H1 (cell line): ENCODE measurements at regions of chr2 and their contacts with region 1.

Region 1: DNA sequence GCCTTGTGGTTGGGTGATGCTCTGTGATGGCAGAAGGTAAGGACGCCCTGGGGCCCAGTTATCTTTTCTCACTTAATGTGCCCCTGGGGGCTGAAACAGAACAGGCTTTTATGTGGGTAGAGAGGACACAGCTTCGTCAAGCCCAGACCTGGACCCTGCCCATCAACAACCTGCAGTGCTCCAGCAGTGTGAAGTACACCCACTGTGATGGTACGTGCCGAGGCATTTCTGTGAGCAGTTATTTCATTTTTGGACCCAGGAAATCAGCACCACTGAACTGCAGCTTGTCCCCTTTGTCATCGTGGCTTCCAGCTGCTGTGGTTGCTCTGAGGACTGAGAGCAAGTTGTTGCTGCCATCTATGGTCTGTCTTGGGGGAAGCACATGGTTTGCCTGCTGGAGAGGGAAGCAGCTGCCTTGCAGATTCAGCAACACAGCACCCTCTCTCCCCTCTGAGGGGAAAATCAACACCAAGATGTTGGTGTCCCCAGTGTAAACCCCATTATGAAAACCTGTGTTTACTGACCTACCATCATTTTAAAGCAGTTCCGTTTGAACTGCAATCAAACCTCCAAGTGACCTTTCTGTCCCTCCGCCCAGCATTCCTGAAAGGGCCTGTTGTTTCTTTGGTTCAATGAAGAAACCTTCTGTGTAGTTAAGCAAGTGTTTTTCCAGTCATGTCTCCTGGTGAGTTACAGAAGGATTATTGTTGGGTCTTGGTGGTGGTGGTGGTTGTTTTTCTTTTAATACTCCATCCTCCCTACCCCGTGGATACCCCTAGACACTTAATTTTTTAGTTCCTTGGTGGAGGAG is 158.2 kb downstream of the MGAT5 start:
- DNase-seq: peak; percentile 39 to 60
- H3K4me3 ChIP-seq: no peak overlapping the region
- H3K27ac ChIP-seq: no peak overlapping the region
- H3K4me1 ChIP-seq: peaks cover 0 to 5% (median 0%) of the 10 kb centered on the region in 4 experiments; a peak in 1 of 7 replicates
- H3K27me3 ChIP-seq: no peaks in the 10 kb centered on the region
- CTCF ChIP-seq: peak; percentile 71 to 92 (median 73)
- EP300 ChIP-seq: no peak
- POLR2A ChIP-seq: no peak
- RAD21 ChIP-seq: peak; percentile 89 to 91

Region 2: DNA sequence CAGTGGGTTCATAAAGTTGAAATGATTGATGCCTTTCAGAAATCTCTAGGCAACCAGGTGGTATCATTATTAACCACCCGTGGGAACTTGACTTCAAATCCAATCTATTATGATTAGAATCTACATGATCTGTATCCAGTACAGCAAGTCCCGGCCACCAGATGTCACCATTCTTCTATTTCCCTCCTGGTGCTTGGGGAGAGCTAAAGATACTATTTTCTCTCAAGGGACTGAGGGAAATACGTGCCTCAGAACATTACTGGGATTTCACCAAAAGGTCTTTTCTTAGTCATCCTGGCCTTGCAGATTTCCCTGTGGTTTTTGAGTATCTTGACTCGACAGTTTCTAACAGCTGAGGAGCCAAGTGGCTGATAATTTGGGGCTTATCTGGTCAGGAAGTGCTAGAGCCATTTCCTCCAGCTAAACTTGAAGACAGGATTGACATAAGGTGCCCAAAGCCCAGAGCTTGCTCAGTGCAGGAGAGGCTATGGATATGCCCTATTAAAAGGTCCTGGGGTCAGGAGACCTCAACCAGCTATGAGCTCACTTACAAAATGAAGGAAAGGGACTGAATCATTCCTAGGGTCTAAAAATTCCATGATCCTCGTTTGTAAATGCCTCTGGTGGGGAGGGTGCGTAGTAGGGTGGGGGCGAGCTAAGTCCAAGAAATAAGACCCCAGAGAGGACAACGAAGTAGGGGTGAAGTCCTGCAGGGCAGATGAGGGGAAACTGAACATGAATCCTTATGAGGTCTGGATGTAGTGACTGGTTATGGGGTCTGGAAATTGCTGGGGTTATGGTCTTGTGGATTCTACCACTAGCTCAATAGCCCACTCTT is 293.5 kb before region 1 on chr2:
- CTCF ChIA-PET with region 1: interaction called, 50 read pairs
- POLR2A ChIA-PET with region 1: no interaction called
- DNase-seq: peak in 1 of 2 experiments; percentile 64
- H3K4me3 ChIP-seq: no peak overlapping the region
- H3K27ac ChIP-seq: no peak overlapping the region
- H3K4me1 ChIP-seq: peaks cover 6 to 18% (median 14%) of the 10 kb centered on the region in 4 experiments; a peak in 6 of 7 replicates
- H3K27me3 ChIP-seq: peaks cover 0 to 3% (median 0%) of the 10 kb centered on the region in 4 experiments; a peak in 1 of 7 replicates
- CTCF ChIP-seq: peak in 2 of 3 experiments; percentile 75 to 83; a peak in 3 of 4 replicates
- EP300 ChIP-seq: no peak
- POLR2A ChIP-seq: no peak
- RAD21 ChIP-seq: peak; percentile 95 to 97

Region 3: GRCh38 chr2:134352844-134353243 is 59.2 kb before region 1 on chr2:
- CTCF ChIA-PET with region 1: no interaction called
- POLR2A ChIA-PET with region 1: no interaction called
- DNase-seq: no peak
- H3K4me3 ChIP-seq: no peak overlapping the region
- H3K27ac ChIP-seq: no peak overlapping the region
- H3K4me1 ChIP-seq: peaks cover 0 to 2% (median 0%) of the 10 kb centered on the region in 4 experiments; a peak in 1 of 7 replicates
- H3K27me3 ChIP-seq: no peaks in the 10 kb centered on the region
- CTCF ChIP-seq: no peak
- EP300 ChIP-seq: no peak
- POLR2A ChIP-seq: no peak
- RAD21 ChIP-seq: no peak

Region 4: DNA sequence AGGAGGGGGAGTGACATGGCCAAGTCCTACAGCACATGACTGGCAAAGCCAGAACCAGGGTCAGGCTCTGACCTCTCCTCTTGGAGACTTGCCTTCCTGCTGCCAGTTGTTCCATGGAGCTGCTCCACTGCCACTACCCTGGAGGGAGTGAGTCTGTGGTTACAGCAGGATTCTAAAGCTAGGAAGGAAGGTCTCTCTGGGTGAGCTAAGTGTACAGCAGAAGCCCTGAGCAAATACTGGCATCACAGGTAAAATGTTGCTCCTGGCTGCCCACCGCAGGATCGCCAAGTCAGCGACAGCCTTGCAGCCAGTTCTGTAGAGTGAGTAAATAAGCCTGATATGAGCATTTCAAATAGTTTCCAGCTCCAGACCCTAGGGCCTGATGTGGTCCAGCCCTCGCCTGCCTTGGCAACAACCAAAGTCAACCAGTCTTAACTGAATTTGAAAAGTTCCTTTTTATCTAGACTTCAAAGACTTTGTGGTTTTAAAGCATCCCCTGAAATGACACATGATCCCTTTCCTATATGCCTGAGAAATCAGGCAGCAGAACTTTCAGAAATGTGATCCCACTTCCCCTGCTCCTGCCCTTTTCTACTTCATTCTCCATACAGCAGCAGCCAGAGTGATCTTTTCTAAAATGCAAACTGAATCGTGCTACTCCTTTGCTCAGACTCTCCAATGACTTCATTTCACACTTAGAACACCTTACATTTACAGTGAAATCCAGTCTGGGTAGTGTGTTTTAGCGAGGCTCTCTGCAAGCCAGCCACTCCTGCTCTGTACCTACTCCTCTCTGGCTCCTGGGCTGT is 43.8 kb before region 1 on chr2:
- CTCF ChIA-PET with region 1: interaction called, 34 read pairs
- POLR2A ChIA-PET with region 1: no interaction called
- DNase-seq: no peak
- H3K4me3 ChIP-seq: no peak overlapping the region
- H3K27ac ChIP-seq: no peak overlapping the region
- H3K4me1 ChIP-seq: no peaks in the 10 kb centered on the region
- H3K27me3 ChIP-seq: no peaks in the 10 kb centered on the region
- CTCF ChIP-seq: no peak
- EP300 ChIP-seq: no peak
- POLR2A ChIP-seq: no peak
- RAD21 ChIP-seq: no peak

Region 5: DNA sequence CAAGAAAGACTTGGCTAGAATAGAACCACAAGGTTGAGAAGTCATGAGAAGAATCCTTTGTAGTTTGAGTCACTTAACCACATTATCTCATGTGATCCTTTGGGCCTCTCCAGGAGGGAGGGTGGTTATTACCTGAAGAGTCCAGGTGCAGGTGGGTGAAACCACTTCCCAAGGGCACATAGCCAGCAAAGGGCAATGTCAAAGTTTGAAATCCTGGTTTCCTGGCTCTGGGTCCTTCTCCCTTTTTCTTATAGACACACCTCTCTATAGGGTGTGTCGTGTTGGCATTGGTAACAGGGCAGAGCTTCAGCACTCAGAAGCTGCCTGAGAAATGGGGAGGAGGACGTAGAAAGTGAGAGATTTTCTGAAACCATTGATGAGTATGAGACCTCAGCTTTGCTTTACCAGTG is 20.3 kb before region 1 on chr2:
- CTCF ChIA-PET with region 1: interaction called, 79 read pairs
- POLR2A ChIA-PET with region 1: no interaction called
- DNase-seq: no peak
- H3K4me3 ChIP-seq: no peak overlapping the region
- H3K27ac ChIP-seq: no peak overlapping the region
- H3K4me1 ChIP-seq: no peaks in the 10 kb centered on the region
- H3K27me3 ChIP-seq: no peaks in the 10 kb centered on the region
- CTCF ChIP-seq: no peak
- EP300 ChIP-seq: no peak
- POLR2A ChIP-seq: no peak
- RAD21 ChIP-seq: no peak

Region 6: GRCh38 chr2:134446383-134447017 is 34.5 kb after region 1 on chr2:
- CTCF ChIA-PET with region 1: interaction called, 34 read pairs
- POLR2A ChIA-PET with region 1: no interaction called
- DNase-seq: no peak
- H3K4me3 ChIP-seq: no peak overlapping the region
- H3K27ac ChIP-seq: no peak overlapping the region
- H3K4me1 ChIP-seq: no peaks in the 10 kb centered on the region; a peak in 1 of 7 replicates
- H3K27me3 ChIP-seq: no peaks in the 10 kb centered on the region
- CTCF ChIP-seq: no peak
- EP300 ChIP-seq: no peak
- POLR2A ChIP-seq: no peak
- RAD21 ChIP-seq: no peak